ENCODE measurements at regions of chr11 and their contacts with region 1.

Region 1: DNA sequence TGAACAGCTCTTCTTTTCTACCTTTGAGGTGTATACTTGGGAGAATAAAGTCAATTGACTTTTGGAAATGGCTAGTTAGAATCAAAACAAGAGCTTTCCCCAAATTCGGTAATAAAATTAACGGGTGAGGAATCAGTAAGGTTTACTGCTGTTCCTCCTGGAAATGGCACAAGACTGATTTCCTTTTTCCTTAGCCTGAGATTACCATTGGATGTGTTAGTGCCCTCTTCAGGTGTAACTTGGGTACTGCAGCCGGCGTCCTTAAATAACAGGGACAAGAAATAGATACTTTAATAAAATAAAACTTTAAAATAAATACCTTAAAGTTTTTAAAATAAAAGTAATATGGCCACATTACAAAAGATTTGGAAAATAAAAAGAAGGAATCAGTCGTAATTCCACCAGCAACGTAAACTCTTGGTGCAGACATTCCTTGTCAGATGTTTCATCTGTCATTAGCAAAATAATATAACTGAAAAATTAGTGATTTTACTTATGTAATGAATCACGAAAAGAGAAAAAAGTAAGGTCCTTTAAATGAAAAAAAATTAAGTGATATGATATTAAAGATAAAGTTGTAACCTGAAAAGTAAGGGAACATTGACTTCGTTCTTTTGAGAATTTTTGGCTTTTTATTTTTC is 29.7 kb downstream of the ZFTA start:
- DNase-seq: peak; percentile 68 to 90 (median 71)
- ATAC-seq: peak; percentile 52 to 59
- H3K4me3 ChIP-seq: no peak overlapping the region
- H3K27ac ChIP-seq: no peak overlapping the region
- H3K4me1 ChIP-seq: peaks cover 1% of the 10 kb centered on the region
- H3K27me3 ChIP-seq: no peaks in the 10 kb centered on the region

Region 2: DNA sequence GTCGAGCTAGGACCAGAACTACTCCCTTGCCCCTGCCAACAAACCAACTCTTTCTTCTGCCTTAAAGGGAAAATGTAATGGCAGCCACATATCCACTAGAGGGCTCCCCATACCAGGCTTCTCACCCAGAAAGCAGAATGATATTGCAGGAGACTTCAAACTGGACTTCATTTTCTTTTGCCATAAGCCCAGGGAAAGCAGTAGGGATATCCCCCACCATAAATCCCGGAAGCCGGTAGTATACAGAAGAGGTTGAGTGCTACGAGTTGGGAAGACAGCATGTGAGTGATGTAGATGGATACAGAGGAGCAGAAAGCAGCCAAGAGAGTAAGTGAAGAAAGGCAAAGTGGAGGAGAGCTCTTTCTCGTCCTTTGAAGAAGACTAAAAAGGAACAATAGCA is 259.9 kb before region 1 on chr11:
- intact Hi-C with region 1: loop called in 3 of 4 experiments (anchors 10 kb)
- DNase-seq: no peak
- ATAC-seq: peak; percentile 80 to 92
- H3K4me3 ChIP-seq: no peak overlapping the region
- H3K27ac ChIP-seq: no peak overlapping the region
- H3K4me1 ChIP-seq: no peaks in the 10 kb centered on the region
- H3K27me3 ChIP-seq: no peaks in the 10 kb centered on the region

Region 3: GRCh38 chr11:63489879-63490278 is 249.0 kb before region 1 on chr11:
- intact Hi-C with region 1: loop called in 1 of 4 experiments (anchors 10 kb)
- DNase-seq: no peak
- ATAC-seq: peak in 1 of 2 donors; percentile 42
- H3K4me3 ChIP-seq: no peak overlapping the region
- H3K27ac ChIP-seq: peak overlapping the region; percentile 1
- H3K4me1 ChIP-seq: no peaks in the 10 kb centered on the region
- H3K27me3 ChIP-seq: no peaks in the 10 kb centered on the region

Region 4: DNA sequence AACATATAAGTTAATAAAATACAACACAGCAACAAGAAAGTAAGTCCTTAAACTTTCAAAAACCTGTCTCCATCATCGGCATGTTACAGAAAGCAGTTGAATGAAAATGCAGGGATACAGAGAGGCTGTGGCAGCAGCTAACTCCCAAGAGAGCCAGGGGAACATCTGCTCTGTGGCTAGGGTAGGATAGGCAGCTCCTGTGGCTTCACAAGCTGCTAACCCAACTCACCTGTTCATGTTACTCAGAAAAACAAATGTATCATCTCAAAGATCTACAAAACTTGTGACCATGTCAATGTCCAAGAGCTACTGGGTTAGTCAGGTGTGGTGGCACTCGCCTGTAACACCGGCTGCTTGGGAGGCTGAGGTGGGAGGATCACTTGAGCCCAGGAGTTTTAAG is 109.4 kb before region 1 on chr11:
- intact Hi-C with region 1: no loop called
- DNase-seq: no peak
- ATAC-seq: no peak
- H3K4me3 ChIP-seq: no peak overlapping the region
- H3K27ac ChIP-seq: no peak overlapping the region
- H3K4me1 ChIP-seq: no peaks in the 10 kb centered on the region
- H3K27me3 ChIP-seq: no peaks in the 10 kb centered on the region

Region 5: DNA sequence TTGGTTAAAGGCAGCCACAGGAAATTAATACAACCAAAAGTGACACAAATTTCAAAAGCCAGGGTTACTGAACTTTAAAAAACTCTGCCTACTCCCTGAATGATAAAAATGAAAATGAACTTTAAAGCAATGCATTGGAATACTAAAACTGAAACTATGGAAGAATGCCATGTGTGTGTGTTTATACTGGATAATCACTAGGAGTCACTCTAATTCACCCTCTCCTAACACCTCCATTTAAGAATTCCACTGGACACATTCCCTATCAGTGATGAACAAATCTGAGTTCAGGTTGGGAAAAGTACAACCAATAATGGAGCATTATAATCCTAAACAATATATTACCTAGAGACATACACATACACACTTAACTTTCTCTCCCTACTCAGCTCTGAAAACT is 97.1 kb before region 1 on chr11:
- intact Hi-C with region 1: loop called in 2 of 4 experiments (anchors 10 kb)
- DNase-seq: no peak
- ATAC-seq: peak in 1 of 2 donors; percentile 36
- H3K4me3 ChIP-seq: no peak overlapping the region
- H3K27ac ChIP-seq: no peak overlapping the region
- H3K4me1 ChIP-seq: no peaks in the 10 kb centered on the region
- H3K27me3 ChIP-seq: no peaks in the 10 kb centered on the region

Region 6: GRCh38 chr11:64428693-64429092 is 689.9 kb after region 1 on chr11:
- intact Hi-C with region 1: no loop called
- DNase-seq: no peak
- ATAC-seq: no peak
- H3K4me3 ChIP-seq: no peak overlapping the region
- H3K27ac ChIP-seq: no peak overlapping the region
- H3K4me1 ChIP-seq: no peaks in the 10 kb centered on the region
- H3K27me3 ChIP-seq: no peaks in the 10 kb centered on the region

Measured in right cardiac atrium (tissue), 5 donors.